ENCODE measurements at regions of chr13 and their contacts with region 1.

Region 1: GRCh38 chr13:95378603-95379002 is 77.4 kb upstream of the ABCC4 start:
- DNase-seq: no peak
- H3K4me3 ChIP-seq: no peak overlapping the region
- H3K27ac ChIP-seq: no peak overlapping the region
- H3K4me1 ChIP-seq: peaks cover 5% of the 10 kb centered on the region
- H3K27me3 ChIP-seq: no peaks in the 10 kb centered on the region
- CTCF ChIP-seq: no peak

Region 2: DNA sequence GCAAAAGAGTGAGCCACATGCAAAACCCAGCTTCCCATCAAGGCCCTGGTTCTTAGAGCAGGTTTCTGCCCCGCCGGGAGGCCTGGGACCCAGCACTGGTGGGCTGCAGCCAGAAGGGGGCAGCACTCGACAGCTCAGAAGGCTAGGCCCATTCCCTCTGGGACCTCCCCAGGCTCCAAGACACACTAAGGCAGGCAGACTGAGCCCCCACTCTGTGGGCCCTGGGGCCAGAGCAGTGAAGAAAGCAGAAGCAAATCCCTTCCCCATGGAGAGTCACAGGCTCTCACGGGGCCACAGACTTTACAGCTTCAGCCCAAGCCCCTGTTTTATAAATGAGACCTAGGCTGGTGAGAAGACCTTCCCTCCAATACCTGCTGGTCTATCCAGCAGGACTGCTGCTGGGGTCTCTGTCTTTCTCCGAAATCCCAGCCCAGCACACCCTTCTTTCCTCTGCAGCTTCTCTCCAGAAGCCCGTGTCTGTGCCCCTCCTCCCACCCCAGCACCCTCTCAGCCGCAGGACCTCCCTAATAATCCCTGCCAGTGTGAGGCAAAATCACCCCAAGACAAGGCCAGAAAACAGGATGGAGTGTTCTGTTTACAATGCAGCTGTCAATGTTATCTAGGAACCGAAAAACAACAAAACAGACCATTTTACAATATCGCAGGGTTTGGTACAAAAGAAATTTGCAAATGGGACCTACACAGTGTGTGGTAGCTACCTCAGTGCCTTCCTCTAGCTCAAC is 186.6 kb before region 1 on chr13:
- CTCF ChIA-PET with region 1: interaction called, 29 read pairs
- POLR2A ChIA-PET with region 1: no interaction called
- intact Hi-C with region 1: loop called (anchors 1 kb)
- DNase-seq: peak; percentile 91
- H3K4me3 ChIP-seq: no peak overlapping the region
- H3K27ac ChIP-seq: peak overlapping the region; percentile 60
- H3K4me1 ChIP-seq: peaks cover 29% of the 10 kb centered on the region
- H3K27me3 ChIP-seq: no peaks in the 10 kb centered on the region
- CTCF ChIP-seq: peak; percentile 96

Region 3: DNA sequence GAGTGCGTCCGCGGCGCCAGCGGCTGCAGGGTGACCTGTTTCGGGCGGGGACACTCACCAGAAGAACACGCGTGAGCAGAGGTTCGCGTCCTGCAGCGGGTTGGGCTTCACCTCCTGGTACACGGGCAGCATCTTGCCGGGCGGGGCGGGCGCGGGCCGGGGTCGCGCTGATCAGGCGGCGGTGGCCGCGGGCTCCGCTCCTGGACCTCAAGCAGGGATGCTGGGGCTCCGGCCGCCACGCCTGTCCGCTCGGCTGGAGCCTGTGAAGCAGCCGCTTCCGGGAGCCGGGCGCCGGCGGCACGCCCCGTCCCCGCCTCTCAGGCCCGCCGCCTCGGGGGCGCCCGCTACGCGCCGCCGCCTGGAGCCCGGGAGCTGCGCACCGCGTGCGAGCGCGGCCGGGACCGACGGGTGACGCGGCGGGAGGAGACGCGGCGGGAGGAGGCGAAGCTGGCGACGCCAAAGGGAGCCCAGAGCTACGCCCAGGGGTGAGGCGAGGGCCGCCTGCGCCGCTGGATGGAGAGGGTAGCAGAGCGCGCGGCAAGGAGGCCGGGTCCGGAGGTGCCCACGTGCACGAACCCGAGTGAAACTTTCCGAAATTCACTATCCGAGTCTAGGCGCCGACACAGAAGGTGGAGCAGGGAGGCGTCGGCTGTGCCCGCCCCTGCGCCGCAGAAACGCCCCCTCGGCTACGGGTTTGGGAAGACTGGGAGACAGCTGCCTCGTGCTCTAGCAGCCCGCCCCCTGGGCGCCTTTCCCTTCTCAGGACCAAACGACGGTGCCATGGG is 77.2 kb before region 1 on chr13 and contains the start of gene ABCC4:
- CTCF ChIA-PET with region 1: interaction called, 3 read pairs
- POLR2A ChIA-PET with region 1: no interaction called
- intact Hi-C with region 1: loop called (anchors 5 kb)
- DNase-seq: peak; percentile 93
- H3K4me3 ChIP-seq: peak within 1 kb of the TSS; percentile 97
- H3K27ac ChIP-seq: peak within 1 kb of the TSS; percentile 89
- H3K4me1 ChIP-seq: peaks cover 26% of the 10 kb centered on the region
- H3K27me3 ChIP-seq: no peaks in the 10 kb centered on the region
- CTCF ChIP-seq: no peak
- total RNA-seq, gene ABCC4: 42.9 and 52.0 TPM in 2 replicates

Measured in A673 (cell line).